Activated CD4-positive, alpha-beta memory T cell treated with anti-CD3 and anti-CD28 coated beads for 36 hours (primary cell): ENCODE measurements at regions of chrX and their contacts with region 1.

Region 1: DNA sequence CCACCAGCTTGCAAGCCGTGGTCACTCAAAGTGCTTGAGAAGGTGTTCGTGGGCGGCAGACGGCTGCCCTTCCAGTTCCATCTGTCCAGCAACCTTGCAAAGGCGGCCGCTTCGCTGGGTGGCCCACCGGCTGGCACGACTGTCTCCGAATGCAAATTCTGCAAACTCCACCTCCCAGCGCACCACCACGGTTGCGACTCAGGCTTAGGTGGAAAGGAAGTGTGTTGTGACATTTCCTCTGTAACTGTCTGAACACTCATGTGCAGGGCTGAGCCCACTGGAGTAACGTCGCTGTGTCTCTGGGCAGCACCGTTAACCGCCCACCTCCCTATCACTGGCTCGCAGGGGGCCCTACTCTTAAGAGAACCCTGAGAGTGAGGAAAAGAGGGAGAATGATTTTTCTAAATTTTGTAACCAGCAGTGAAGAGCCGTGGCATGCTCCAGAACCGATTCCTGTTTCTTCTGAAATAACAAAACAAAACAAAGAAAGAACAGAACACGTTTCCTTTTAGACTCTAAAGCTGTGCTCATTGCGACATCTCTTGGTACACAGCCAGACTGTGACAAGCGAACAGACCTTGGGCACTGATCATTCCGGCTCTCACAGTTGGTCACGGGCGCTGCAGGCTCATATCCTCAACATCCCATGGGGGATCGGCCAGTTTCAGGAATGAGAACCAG is at the start of gene P2RY8:
- DNase-seq: peak; percentile 90
- H3K4me3 Mint-ChIP-seq: peak within 1 kb of the TSS; percentile 94
- H3K27ac Mint-ChIP-seq: peak within 1 kb of the TSS; percentile 99
- H3K4me1 Mint-ChIP-seq: peaks cover 15% of the 10 kb centered on the region
- H3K27me3 Mint-ChIP-seq: no peaks in the 10 kb centered on the region
- total RNA-seq, gene P2RY8: 30.2 to 32.7 TPM

Region 2: DNA sequence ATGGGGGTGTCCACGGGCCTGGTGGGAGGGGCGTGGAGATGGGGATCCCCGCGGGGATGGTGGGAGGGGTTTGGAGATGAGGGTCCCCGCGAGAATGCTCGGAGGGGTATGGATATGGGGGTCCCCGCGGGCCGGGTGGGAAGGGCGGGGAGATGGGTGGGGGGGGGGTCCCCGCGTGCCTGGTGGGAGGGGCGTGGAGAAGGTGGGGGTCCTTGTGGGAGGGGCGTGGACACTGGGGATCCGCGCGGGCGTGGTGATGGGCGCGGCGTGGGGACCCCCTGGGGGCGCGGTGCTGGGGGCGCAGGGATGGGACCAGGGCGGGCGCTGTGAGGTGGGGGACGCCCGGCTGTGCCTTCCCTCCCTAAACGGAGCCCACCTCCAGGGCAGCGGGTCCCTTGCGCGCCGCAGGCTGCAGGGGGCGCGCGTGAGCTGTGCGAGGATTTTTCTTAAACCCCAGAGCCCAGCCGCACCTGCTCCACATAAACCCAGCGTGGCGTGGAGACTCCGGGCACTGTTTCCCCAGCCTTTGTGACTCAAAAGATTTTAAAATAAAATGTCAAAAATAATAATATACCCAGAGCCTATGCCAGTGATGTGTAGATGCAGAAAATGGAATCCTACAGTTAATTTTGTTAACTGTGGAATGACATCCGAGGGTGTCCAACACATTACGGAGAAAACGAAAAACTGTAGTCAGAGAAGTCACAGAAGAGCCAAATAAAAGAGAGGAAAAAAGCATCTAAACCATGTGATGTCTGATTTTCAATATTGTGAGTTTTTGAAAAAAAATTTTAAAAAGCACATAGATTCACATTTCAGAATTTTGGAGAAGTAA is 83.0 kb before region 1 on chrX:
- CTCF ChIA-PET with region 1: no interaction called
- POLR2A ChIA-PET with region 1: no interaction called
- intact Hi-C with region 1: loop called (anchors 1 kb)
- DNase-seq: peak; percentile 95
- H3K4me3 Mint-ChIP-seq: peak overlapping the region; percentile 52
- H3K27ac Mint-ChIP-seq: peak overlapping the region; percentile 64
- H3K4me1 Mint-ChIP-seq: peaks cover 19% of the 10 kb centered on the region
- H3K27me3 Mint-ChIP-seq: no peaks in the 10 kb centered on the region

Region 3: GRCh38 chrX:1481636-1482529 is 55.3 kb before region 1 on chrX:
- CTCF ChIA-PET with region 1: no interaction called
- POLR2A ChIA-PET with region 1: no interaction called
- intact Hi-C with region 1: loop called (anchors 1 kb)
- DNase-seq: peak; percentile 88
- H3K4me3 Mint-ChIP-seq: peak overlapping the region; percentile 76
- H3K27ac Mint-ChIP-seq: peak overlapping the region; percentile 97
- H3K4me1 Mint-ChIP-seq: peaks cover 72% of the 10 kb centered on the region
- H3K27me3 Mint-ChIP-seq: no peaks in the 10 kb centered on the region

Region 4: DNA sequence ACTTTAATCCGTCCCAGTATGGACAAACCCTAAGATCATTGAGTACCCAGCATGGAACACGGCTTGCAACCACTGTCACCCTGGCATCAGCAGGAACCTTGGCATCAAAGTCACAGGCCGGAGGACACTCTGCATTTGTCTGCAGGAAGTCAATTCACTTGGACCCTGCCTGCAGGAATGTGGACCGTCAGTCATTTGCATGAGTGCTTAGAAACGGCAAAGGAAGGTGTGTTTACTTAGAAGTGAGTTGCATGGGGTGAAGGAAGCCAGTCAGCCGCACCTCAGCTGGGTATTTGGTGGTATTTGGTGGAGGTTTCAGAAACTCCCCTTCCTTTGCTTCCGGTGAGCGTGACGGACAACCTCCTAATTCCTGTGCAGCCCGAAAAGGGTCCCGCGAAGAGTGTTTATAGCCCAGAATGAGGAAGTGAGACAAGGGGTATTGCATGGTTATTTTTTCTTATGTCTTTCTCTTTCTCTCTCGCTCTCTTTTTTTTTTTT is 15.7 kb before region 1 on chrX:
- CTCF ChIA-PET with region 1: no interaction called
- POLR2A ChIA-PET with region 1: no interaction called
- intact Hi-C with region 1: loop called (anchors 1 kb)
- DNase-seq: peak; percentile 85
- H3K4me3 Mint-ChIP-seq: peak overlapping the region; percentile 73
- H3K27ac Mint-ChIP-seq: peak overlapping the region; percentile 97
- H3K4me1 Mint-ChIP-seq: peaks cover 52% of the 10 kb centered on the region
- H3K27me3 Mint-ChIP-seq: no peaks in the 10 kb centered on the region

Region 5: GRCh38 chrX:1580735-1581531 is 43.8 kb after region 1 on chrX:
- CTCF ChIA-PET with region 1: no interaction called
- POLR2A ChIA-PET with region 1: no interaction called
- intact Hi-C with region 1: loop called (anchors 1 kb)
- DNase-seq: peak; percentile 88
- H3K4me3 Mint-ChIP-seq: peak overlapping the region; percentile 50
- H3K27ac Mint-ChIP-seq: peak overlapping the region; percentile 38
- H3K4me1 Mint-ChIP-seq: peaks cover 27% of the 10 kb centered on the region
- H3K27me3 Mint-ChIP-seq: no peaks in the 10 kb centered on the region